Prostate gland (tissue), 2 donors: ENCODE measurements at regions of chr2 and their contacts with region 1.

Region 1: GRCh38 chr2:41966431-41966893 is 81.4 kb upstream of the PKDCC start:
- DNase-seq: peak; percentile 27
- H3K4me3 ChIP-seq: no peak overlapping the region
- H3K27ac ChIP-seq: peak overlapping the region in 1 of 2 donors; percentile 55
- H3K4me1 ChIP-seq: no peaks in the 10 kb centered on the region
- H3K27me3 ChIP-seq: no peaks in the 10 kb centered on the region
- CTCF ChIP-seq: no peak
- POLR2A ChIP-seq: no peak

Region 2: GRCh38 chr2:41869542-41870264 is 96.8 kb before region 1 on chr2:
- intact Hi-C with region 1: loop called (anchors 10 kb)
- DNase-seq: peak; percentile 56
- H3K4me3 ChIP-seq: no peak overlapping the region
- H3K27ac ChIP-seq: no peak overlapping the region
- H3K4me1 ChIP-seq: no peaks in the 10 kb centered on the region
- H3K27me3 ChIP-seq: no peaks in the 10 kb centered on the region
- CTCF ChIP-seq: peak; percentile 80 to 90 (median 86)
- POLR2A ChIP-seq: no peak

Region 3: GRCh38 chr2:41933585-41934320 is 32.7 kb before region 1 on chr2:
- intact Hi-C with region 1: loop called (anchors 5 kb)
- DNase-seq: no peak
- H3K4me3 ChIP-seq: no peak overlapping the region
- H3K27ac ChIP-seq: no peak overlapping the region
- H3K4me1 ChIP-seq: no peaks in the 10 kb centered on the region
- H3K27me3 ChIP-seq: no peaks in the 10 kb centered on the region
- CTCF ChIP-seq: no peak
- POLR2A ChIP-seq: no peak

Region 4: GRCh38 chr2:42047488-42048298 is 81.2 kb after region 1 on chr2 and contains the start of gene PKDCC:
- intact Hi-C with region 1: loop called (anchors 10 kb)
- DNase-seq: peak; percentile 56
- H3K4me3 ChIP-seq: peak within 1 kb of the TSS; percentile 51 to 53
- H3K27ac ChIP-seq: peak within 1 kb of the TSS; percentile 64 to 73
- H3K4me1 ChIP-seq: no peaks in the 10 kb centered on the region
- H3K27me3 ChIP-seq: no peaks in the 10 kb centered on the region
- CTCF ChIP-seq: no peak
- POLR2A ChIP-seq: no peak
- total RNA-seq, gene PKDCC: 11.1 to 61.4 TPM

Region 5: GRCh38 chr2:42196403-42197267 is 230.2 kb after region 1 on chr2:
- intact Hi-C with region 1: no loop called
- DNase-seq: no peak
- H3K4me3 ChIP-seq: no peak overlapping the region
- H3K27ac ChIP-seq: no peak overlapping the region
- H3K4me1 ChIP-seq: no peaks in the 10 kb centered on the region
- H3K27me3 ChIP-seq: no peaks in the 10 kb centered on the region
- CTCF ChIP-seq: peak in 2 of 4 experiments; percentile 40 to 46
- POLR2A ChIP-seq: no peak